ENCODE measurements at regions of chr21 and their contacts with region 1.

Region 1: GRCh38 chr21:45043541-45044020 is 30.8 kb upstream of the ADARB1 start:
- DNase-seq: no peak
- ATAC-seq: no peak
- H3K4me3 ChIP-seq: no peak overlapping the region
- H3K27ac ChIP-seq: no peak overlapping the region
- H3K4me1 ChIP-seq: peaks cover 14% of the 10 kb centered on the region
- H3K27me3 ChIP-seq: no peaks in the 10 kb centered on the region
- CTCF ChIP-seq: no peak

Region 2: GRCh38 chr21:45019957-45020537 is 23.5 kb before region 1 on chr21:
- intact Hi-C with region 1: loop called in 1 of 2 experiments (anchors 1 kb)
- DNase-seq: peak; percentile 24 to 51
- ATAC-seq: peak in 1 of 4 donors; percentile 26
- H3K4me3 ChIP-seq: no peak overlapping the region
- H3K27ac ChIP-seq: no peak overlapping the region
- H3K4me1 ChIP-seq: no peaks in the 10 kb centered on the region
- H3K27me3 ChIP-seq: peaks cover 0 to 2% (median 0%) of the 10 kb centered on the region in 3 donors
- CTCF ChIP-seq: no peak

Region 3: GRCh38 chr21:45427331-45428271 is 384.0 kb after region 1 on chr21:
- intact Hi-C with region 1: no loop called
- DNase-seq: peak; percentile 71 to 79
- ATAC-seq: peak; percentile 71 to 80 (median 76)
- H3K4me3 ChIP-seq: no peak overlapping the region
- H3K27ac ChIP-seq: no peak overlapping the region
- H3K4me1 ChIP-seq: no peaks in the 10 kb centered on the region
- H3K27me3 ChIP-seq: peaks cover 0 to 13% (median 2%) of the 10 kb centered on the region in 3 donors
- CTCF ChIP-seq: no peak

Region 4: GRCh38 chr21:46285761-46286496 is 1242.3 kb after region 1 on chr21 and contains the start of gene YBEY:
- intact Hi-C with region 1: no loop called
- DNase-seq: peak; percentile 92 to 95
- ATAC-seq: peak; percentile 96 to 98 (median 98)
- H3K4me3 ChIP-seq: peak within 1 kb of the TSS; percentile 93
- H3K27ac ChIP-seq: peak within 1 kb of the TSS; percentile 96
- H3K4me1 ChIP-seq: peaks cover 51% of the 10 kb centered on the region
- H3K27me3 ChIP-seq: no peaks in the 10 kb centered on the region
- CTCF ChIP-seq: peak; percentile 33
- total RNA-seq, gene YBEY: 4.7 to 11.0 (median 7.1) TPM